ENCODE measurements at regions of chr14 and their contacts with region 1.

Region 1: DNA sequence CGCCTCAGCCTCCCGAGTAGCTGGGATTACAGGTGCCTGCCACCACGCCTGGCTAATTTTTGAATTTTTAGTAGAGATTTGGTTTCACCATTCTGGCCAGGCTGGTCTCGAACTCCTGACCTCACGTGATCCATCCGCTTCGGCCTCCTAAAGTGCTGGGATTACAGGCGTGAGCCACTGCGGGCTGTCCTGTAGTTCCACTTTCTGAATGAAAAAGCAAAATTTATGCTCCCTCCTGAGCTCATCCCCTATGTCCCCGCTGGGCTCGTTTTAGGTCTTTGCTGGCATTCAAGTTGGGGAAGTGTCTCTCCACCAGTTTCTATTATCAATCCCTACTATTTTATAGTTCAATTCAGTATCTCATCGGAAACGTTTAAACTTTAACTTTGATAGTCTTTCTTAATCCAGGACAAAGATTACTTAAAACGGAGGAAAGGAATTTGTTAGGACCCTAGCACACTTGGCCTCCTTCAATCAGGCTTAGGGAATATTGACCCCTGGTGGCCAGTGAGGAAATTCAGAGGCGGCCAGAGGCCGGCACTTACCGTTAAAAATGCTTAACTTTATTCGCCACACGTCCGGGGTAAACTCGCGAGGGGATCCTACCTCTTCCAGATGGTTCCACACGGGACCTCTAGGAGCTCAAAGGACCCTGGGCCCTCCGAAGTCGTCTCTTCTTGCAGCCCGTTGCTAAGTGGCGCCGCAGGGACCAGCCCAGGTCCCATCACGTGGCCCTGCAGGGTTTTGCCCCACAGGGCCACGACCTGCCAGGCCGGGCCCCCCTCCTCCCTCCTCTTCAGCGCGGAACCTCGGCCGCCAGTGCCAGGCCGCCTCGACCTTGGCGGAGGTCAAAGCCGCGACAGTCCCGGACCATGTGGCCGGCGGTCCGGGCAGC is 11.4 kb upstream of the DNAL1 start:
- DNase-seq: peak; percentile 70
- ATAC-seq: peak; percentile 83
- H3K4me3 Mint-ChIP-seq: peak overlapping the region; percentile 65
- H3K27ac Mint-ChIP-seq: no peak overlapping the region
- H3K4me1 Mint-ChIP-seq: peaks cover 5% of the 10 kb centered on the region
- H3K27me3 Mint-ChIP-seq: peaks cover 16% of the 10 kb centered on the region

Region 2: GRCh38 chr14:73503648-73504047 is 129.7 kb before region 1 on chr14:
- CTCF ChIA-PET with region 1: interaction called, 42 read pairs
- DNase-seq: peak; percentile 60
- ATAC-seq: peak; percentile 90
- H3K4me3 Mint-ChIP-seq: no peak overlapping the region
- H3K27ac Mint-ChIP-seq: peak overlapping the region; percentile 72
- H3K4me1 Mint-ChIP-seq: peaks cover 7% of the 10 kb centered on the region
- H3K27me3 Mint-ChIP-seq: no peaks in the 10 kb centered on the region

Region 3: GRCh38 chr14:73576391-73576790 is 57.0 kb before region 1 on chr14:
- CTCF ChIA-PET with region 1: no interaction called
- DNase-seq: no peak
- ATAC-seq: no peak
- H3K4me3 Mint-ChIP-seq: no peak overlapping the region
- H3K27ac Mint-ChIP-seq: no peak overlapping the region
- H3K4me1 Mint-ChIP-seq: peaks cover 3% of the 10 kb centered on the region
- H3K27me3 Mint-ChIP-seq: no peaks in the 10 kb centered on the region

Region 4: DNA sequence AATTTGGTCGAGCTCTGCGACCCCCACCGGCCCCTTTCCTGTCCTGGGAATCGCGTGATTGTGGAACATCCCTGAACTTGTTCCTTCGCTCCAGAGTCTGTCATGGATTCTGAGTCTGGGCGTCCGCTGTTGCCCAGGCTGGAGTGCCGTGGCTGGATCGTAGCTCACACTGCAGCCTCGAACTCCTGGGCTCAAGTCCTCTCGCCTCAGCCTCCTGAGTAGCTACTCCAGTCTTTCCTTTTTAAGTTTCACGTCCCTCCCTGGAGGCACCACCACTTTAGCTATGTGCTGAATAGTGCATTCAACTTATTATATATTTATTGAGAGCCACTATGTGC is 20.3 kb before region 1 on chr14:
- CTCF ChIA-PET with region 1: interaction called, 10 read pairs
- DNase-seq: no peak
- ATAC-seq: no peak
- H3K4me3 Mint-ChIP-seq: peak overlapping the region; percentile 79
- H3K27ac Mint-ChIP-seq: peak overlapping the region; percentile 78
- H3K4me1 Mint-ChIP-seq: peaks cover 16% of the 10 kb centered on the region
- H3K27me3 Mint-ChIP-seq: peaks cover 14% of the 10 kb centered on the region

Region 5: GRCh38 chr14:73903028-73903427 is 269.7 kb after region 1 on chr14:
- CTCF ChIA-PET with region 1: no interaction called
- DNase-seq: no peak
- ATAC-seq: no peak
- H3K4me3 Mint-ChIP-seq: no peak overlapping the region
- H3K27ac Mint-ChIP-seq: no peak overlapping the region
- H3K4me1 Mint-ChIP-seq: no peaks in the 10 kb centered on the region
- H3K27me3 Mint-ChIP-seq: no peaks in the 10 kb centered on the region

Measured in activated CD8-positive, alpha-beta memory T cell treated with anti-CD3 and anti-CD28 coated beads, Interleukin-2, amount 10 ng/mL, durations not matched to agents 7 days and 5 days (primary cell).